ENCODE measurements at regions of chr5 and their contacts with region 1.

Region 1: GRCh38 chr5:115838885-115839518 is 2.4 kb downstream of the ATG12 start:
- DNase-seq: no peak

Region 2: GRCh38 chr5:114581136-114581535 is 1257.9 kb before region 1 on chr5:
- intact Hi-C with region 1: no loop called
- DNase-seq: no peak

Region 3: DNA sequence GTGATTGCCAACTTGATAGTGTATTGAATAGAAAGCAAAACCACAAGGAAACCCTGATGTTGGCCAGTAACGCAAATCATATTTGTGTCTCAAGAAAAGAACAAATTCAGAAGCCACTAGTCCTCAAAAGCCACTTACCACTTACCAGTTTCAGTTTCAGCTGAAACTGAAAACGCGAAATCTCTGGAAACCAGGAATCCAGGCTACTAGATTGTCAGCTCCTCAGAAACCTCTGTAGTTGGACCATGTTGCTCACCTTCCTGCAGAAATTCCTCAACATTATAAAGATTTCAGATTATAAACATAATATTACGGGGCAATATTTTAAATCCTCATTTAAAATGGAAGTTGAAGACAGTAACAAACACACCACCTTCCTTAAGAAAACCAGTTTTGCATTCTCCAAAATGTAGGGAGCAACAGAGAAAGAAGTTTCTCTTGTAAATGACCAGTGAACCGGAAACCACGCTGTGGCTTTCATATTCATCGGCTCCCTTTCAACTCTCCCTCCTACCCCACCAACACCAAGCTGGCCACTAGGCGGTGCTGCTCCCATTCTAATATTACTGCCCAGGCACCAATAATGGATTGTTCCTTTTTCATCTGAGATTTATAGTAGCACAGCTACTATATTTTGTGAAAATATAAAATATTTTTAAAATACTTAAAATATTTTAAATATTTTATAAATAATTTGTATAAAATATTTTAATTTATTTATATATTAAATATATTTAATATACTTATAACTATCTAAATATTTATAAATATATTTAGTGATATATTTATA is 204.5 kb before region 1 on chr5:
- intact Hi-C with region 1: loop called in 1 of 2 experiments (anchors 5 kb)
- DNase-seq: peak; percentile 95

Region 4: GRCh38 chr5:116068028-116068632 is 229.1 kb after region 1 on chr5:
- intact Hi-C with region 1: loop called in 1 of 2 experiments (anchors 5 kb)
- DNase-seq: no peak

Measured in posterior vena cava (tissue), 2 donors.